ENCODE measurements at regions of chr18 and their contacts with region 1.

Region 1: DNA sequence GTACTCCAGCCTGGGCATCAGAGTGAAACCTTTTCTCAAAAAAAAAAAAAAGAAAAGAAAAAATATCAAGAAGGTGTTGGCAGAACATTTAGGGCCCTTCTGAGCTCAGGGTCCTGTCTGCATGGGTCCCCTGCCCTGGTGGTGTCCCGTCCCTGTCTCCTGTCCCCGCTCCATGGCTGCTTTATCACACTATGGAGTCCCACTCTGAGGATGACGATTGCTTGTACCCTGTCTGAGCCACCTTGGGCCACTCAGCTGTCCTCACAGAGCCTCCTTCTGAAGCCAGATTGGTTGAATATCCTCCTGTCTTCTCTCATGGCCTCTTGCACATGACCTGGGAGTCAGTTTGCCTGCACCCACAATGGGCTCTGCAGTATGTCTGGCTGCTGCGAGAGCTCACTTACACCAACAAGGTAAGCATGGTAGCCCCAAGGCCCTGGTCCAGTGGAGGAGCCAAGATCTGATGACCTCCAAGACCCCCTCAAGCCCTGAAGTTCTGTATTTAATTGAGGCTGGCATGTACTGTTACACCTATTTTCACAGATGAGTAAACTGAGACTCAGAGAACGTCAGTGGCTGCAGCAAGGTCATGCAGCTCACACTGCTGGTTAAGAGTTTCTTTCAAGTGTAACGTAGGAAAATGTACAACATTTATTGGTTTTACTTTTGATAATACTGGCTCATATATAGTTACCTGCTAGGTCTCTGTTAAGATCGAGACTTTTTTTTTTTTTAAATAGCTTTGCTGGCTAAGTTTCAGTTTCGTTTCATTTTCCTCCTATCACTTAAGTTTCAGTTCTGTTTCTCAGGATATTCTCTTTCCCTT is 16.9 kb upstream of the ZCCHC2 start:
- DNase-seq: peak; percentile 51
- ATAC-seq: peak; percentile 84
- H3K4me3 Mint-ChIP-seq: peak overlapping the region; percentile 75
- H3K27ac Mint-ChIP-seq: peak overlapping the region; percentile 100
- H3K4me1 Mint-ChIP-seq: peaks cover 33% of the 10 kb centered on the region
- H3K27me3 Mint-ChIP-seq: no peaks in the 10 kb centered on the region

Region 2: DNA sequence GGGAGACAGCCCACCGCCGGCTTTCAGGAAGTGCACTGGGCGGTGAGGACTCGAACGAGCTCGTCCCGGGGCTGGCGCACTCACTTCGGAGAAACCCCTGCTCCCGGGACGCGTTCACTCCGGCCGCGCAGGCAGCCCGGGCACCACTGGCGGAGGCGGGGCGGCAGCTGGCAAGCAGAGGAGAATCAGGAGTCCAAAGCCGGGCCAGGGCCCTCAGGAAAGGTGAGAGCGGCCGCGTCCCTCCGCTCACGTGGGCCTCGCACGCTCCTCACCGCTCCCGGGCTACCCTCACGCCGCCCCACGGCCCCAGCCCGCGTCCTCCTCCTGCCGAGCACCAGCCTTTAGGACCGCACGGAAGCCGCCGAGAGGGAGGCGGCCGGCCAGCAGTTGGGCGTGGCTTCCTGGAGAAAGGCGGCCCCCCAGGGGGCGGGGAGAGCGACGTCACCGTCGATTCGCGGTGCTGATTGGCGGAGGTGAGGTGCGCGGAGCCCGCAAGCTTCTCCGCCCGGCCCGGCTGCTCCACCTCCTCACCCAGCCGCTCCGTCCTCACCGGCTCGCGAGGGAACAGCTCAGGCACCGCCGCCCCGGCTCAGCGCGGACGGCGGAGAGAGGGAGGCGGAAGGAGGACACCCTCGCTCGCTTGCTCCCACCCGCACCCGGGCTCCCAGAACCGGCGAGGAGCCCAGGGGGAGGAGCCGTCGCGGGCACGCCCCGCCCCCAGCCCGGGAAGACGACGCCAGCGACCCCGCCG is 16.8 kb after region 1 on chr18 and contains the start of gene ZCCHC2:
- CTCF ChIA-PET with region 1: interaction called, 26 read pairs
- POLR2A ChIA-PET with region 1: interaction called, 100 read pairs
- DNase-seq: peak; percentile 98
- ATAC-seq: peak; percentile 84
- H3K4me3 Mint-ChIP-seq: peak within 1 kb of the TSS; percentile 94
- H3K27ac Mint-ChIP-seq: peak within 1 kb of the TSS; percentile 91
- H3K4me1 Mint-ChIP-seq: peaks cover 27% of the 10 kb centered on the region
- H3K27me3 Mint-ChIP-seq: no peaks in the 10 kb centered on the region
- total RNA-seq, gene ZCCHC2: 45.5 to 46.4 TPM